GM12878 (cell line): ENCODE measurements at regions of chr7 and their contacts with region 1.

Region 1: GRCh38 chr7:151448261-151449252 is 8.6 kb upstream of the CRYGN start:
- DNase-seq: no peak
- ATAC-seq: peak; percentile 94
- H3K4me3 ChIP-seq: peak overlapping the region; percentile 56; the same call in 1 of the 2 replicates
- H3K27ac ChIP-seq: no peak overlapping the region
- H3K4me1 ChIP-seq: no peaks in the 10 kb centered on the region; the same call in 1 of the 2 replicates
- H3K27me3 ChIP-seq: no peaks in the 10 kb centered on the region; a peak in 1 of 4 replicates
- CTCF ChIP-seq: peak; percentile 68 to 76 (median 70); a peak in 5 of 6 replicates
- EP300 ChIP-seq: no peak
- POLR2A ChIP-seq: no peak
- RAD21 ChIP-seq: peak; percentile 72

Region 2: GRCh38 chr7:151322906-151323305 is 125.7 kb before region 1 on chr7:
- CTCF ChIA-PET with region 1: no interaction called
- POLR2A ChIA-PET with region 1: no interaction called
- RAD21 ChIA-PET with region 1: no interaction called
- SMC1A ChIA-PET with region 1: no interaction called
- in situ Hi-C with region 1: no loop called
- intact Hi-C with region 1: no loop called
- DNase-seq: no peak
- ATAC-seq: no peak
- H3K4me3 ChIP-seq: no peak overlapping the region
- H3K27ac ChIP-seq: no peak overlapping the region
- H3K4me1 ChIP-seq: no peaks in the 10 kb centered on the region
- H3K27me3 ChIP-seq: no peaks in the 10 kb centered on the region
- CTCF ChIP-seq: no peak
- EP300 ChIP-seq: no peak
- POLR2A ChIP-seq: no peak
- RAD21 ChIP-seq: no peak

Region 3: GRCh38 chr7:151351027-151351426 is 97.5 kb before region 1 on chr7:
- CTCF ChIA-PET with region 1: interaction called, 25 read pairs
- POLR2A ChIA-PET with region 1: no interaction called
- RAD21 ChIA-PET with region 1: interaction called, 3 read pairs
- SMC1A ChIA-PET with region 1: interaction called, 6 read pairs
- in situ Hi-C with region 1: no loop called
- intact Hi-C with region 1: no loop called
- DNase-seq: no peak
- ATAC-seq: peak; percentile 76
- H3K4me3 ChIP-seq: peak overlapping the region; percentile 34; the same call in 1 of the 2 replicates
- H3K27ac ChIP-seq: peak overlapping the region; percentile 94
- H3K4me1 ChIP-seq: peaks cover 37% of the 10 kb centered on the region
- H3K27me3 ChIP-seq: no peaks in the 10 kb centered on the region
- CTCF ChIP-seq: peak; percentile 56 to 67 (median 59)
- EP300 ChIP-seq: no peak
- POLR2A ChIP-seq: no peak
- RAD21 ChIP-seq: peak; percentile 54

Region 4: GRCh38 chr7:151368136-151368571 is 80.4 kb before region 1 on chr7:
- CTCF ChIA-PET with region 1: interaction called, 25 read pairs
- POLR2A ChIA-PET with region 1: no interaction called
- RAD21 ChIA-PET with region 1: interaction called, 14 read pairs
- SMC1A ChIA-PET with region 1: interaction called, 10 read pairs
- in situ Hi-C with region 1: loop called (anchors 10 kb)
- intact Hi-C with region 1: loop called (anchors 1 kb)
- DNase-seq: no peak
- ATAC-seq: peak; percentile 100
- H3K4me3 ChIP-seq: no peak overlapping the region
- H3K27ac ChIP-seq: no peak overlapping the region
- H3K4me1 ChIP-seq: no peaks in the 10 kb centered on the region
- H3K27me3 ChIP-seq: no peaks in the 10 kb centered on the region
- CTCF ChIP-seq: peak; percentile 86 to 95 (median 88)
- EP300 ChIP-seq: no peak
- POLR2A ChIP-seq: no peak
- RAD21 ChIP-seq: peak; percentile 70

Region 5: GRCh38 chr7:151381348-151382078 is 67.0 kb before region 1 on chr7:
- CTCF ChIA-PET with region 1: no interaction called
- POLR2A ChIA-PET with region 1: no interaction called
- RAD21 ChIA-PET with region 1: no interaction called
- SMC1A ChIA-PET with region 1: no interaction called
- in situ Hi-C with region 1: loop called (anchors 5 kb)
- intact Hi-C with region 1: no loop called
- DNase-seq: no peak
- ATAC-seq: peak; percentile 52
- H3K4me3 ChIP-seq: peak overlapping the region; percentile 45; the same call in 1 of the 2 replicates
- H3K27ac ChIP-seq: no peak overlapping the region
- H3K4me1 ChIP-seq: peaks cover 7% of the 10 kb centered on the region
- H3K27me3 ChIP-seq: peaks cover 2 to 3% of the 10 kb centered on the region in 2 experiments; a peak in 3 of 4 replicates
- CTCF ChIP-seq: no peak
- EP300 ChIP-seq: no peak
- POLR2A ChIP-seq: no peak
- RAD21 ChIP-seq: no peak

Region 6: DNA sequence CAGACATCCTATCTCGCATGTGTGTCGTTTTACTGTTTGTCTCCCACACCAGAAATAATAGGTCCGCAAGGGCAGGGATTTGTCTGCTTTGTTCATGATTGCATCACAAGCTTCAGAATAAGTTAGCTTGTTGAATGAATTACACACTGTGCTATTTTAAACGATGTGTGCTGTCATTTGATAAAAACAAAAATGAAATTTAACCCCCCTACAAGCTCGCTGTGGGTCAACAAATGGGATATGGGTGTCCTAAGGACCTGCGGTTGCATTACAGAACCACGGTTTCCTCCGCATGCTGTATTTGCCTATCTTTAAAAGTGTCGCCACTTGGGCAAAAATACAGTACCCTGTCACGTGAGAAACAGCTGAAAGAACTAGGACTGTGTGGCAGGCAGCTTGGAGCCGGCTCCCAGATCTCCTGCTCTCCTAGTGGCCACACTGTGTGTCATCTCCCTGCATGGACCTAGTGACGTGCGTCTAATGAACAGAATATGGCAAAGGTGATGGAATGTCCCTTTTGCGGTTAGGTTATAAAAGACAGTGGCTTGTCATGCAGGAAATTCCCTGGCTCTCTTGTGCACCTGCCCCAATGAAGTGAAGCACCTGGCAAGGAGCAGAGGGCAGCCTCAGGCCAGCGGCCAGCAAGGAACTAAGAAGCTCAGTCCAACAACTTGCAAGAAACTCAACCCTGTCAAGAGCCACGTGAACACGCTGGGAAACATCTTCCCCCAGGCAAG is 24.3 kb after region 1 on chr7:
- CTCF ChIA-PET with region 1: interaction called, 6 read pairs
- POLR2A ChIA-PET with region 1: no interaction called
- RAD21 ChIA-PET with region 1: no interaction called
- SMC1A ChIA-PET with region 1: interaction called, 14 read pairs
- in situ Hi-C with region 1: no loop called
- intact Hi-C with region 1: no loop called
- DNase-seq: peak; percentile 83
- ATAC-seq: peak; percentile 77
- H3K4me3 ChIP-seq: peak overlapping the region; percentile 54
- H3K27ac ChIP-seq: peak overlapping the region; percentile 96
- H3K4me1 ChIP-seq: peaks cover 45% of the 10 kb centered on the region
- H3K27me3 ChIP-seq: no peaks in the 10 kb centered on the region
- CTCF ChIP-seq: peak in 2 of 3 experiments; percentile 5 to 7; a peak in 2 of 6 replicates
- EP300 ChIP-seq: peak; percentile 76 to 90; a peak in 3 of 4 replicates
- POLR2A ChIP-seq: peak; percentile 25; the same call in 1 of the 2 replicates
- RAD21 ChIP-seq: no peak

Region 7: DNA sequence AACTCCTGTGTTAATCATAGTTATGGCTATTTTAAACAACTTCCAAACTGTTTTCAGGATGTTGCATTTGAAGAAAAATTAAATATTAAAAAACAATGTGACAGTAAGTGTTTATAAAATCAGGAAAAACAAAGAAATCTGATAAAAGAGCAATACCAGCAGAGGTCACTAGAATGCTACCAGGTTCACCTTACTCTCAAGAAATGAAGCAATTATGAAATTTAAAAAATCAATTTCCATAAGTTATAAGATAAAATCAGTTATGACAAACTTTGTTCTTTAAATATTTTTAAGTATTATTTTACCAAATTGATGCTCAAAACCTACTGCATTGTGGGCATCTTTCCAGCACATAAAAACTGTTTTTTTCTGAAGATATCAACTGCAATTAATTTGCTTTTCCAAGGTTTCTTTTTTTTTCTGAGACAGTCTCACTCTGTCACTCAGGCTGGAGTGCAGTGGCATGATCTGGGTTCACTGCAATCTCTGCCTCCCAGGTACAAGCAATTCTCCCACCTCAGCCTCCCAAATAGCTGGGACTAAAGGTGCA is 121.9 kb after region 1 on chr7:
- CTCF ChIA-PET with region 1: no interaction called
- POLR2A ChIA-PET with region 1: no interaction called
- RAD21 ChIA-PET with region 1: no interaction called
- SMC1A ChIA-PET with region 1: no interaction called
- in situ Hi-C with region 1: no loop called
- intact Hi-C with region 1: no loop called
- DNase-seq: no peak
- ATAC-seq: no peak
- H3K4me3 ChIP-seq: no peak overlapping the region
- H3K27ac ChIP-seq: no peak overlapping the region
- H3K4me1 ChIP-seq: no peaks in the 10 kb centered on the region
- H3K27me3 ChIP-seq: no peaks in the 10 kb centered on the region
- CTCF ChIP-seq: peak; percentile 23 to 44 (median 34); a peak in 3 of 6 replicates
- EP300 ChIP-seq: no peak
- POLR2A ChIP-seq: no peak
- RAD21 ChIP-seq: peak; percentile 65

Region 8: DNA sequence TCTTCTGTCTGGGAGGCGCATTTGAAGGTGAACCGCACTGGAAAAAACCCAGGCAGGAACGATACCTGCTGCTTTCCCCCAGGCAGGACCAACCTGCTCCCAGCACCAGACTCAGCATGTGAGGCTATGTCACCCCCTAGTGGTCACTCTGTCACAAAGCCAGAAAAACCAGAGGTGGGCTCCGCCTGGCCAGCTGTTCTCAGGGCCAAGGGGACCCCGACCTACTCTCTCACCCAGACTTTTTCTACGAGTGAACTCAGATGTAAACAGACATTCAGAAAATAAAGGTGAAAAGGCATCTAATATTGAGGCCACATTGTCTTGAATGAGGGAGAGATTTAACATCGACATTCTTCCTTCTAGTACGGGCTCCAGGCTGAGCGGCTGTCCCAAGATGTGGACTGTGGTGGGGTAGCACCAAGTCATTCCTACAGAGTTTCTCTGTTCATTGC is 311.1 kb after region 1 on chr7:
- CTCF ChIA-PET with region 1: interaction called, 7 read pairs
- POLR2A ChIA-PET with region 1: no interaction called
- RAD21 ChIA-PET with region 1: no interaction called
- SMC1A ChIA-PET with region 1: no interaction called
- in situ Hi-C with region 1: no loop called
- intact Hi-C with region 1: loop called (anchors 2 kb)
- DNase-seq: no peak
- ATAC-seq: peak; percentile 91
- H3K4me3 ChIP-seq: no peak overlapping the region; the same call in 1 of the 2 replicates
- H3K27ac ChIP-seq: no peak overlapping the region
- H3K4me1 ChIP-seq: no peaks in the 10 kb centered on the region
- H3K27me3 ChIP-seq: no peaks in the 10 kb centered on the region; a peak in 1 of 4 replicates
- CTCF ChIP-seq: peak; percentile 87 to 89 (median 88)
- EP300 ChIP-seq: no peak
- POLR2A ChIP-seq: no peak
- RAD21 ChIP-seq: peak; percentile 94